Left cardiac atrium (tissue), 4 donors: ENCODE measurements at regions of chr11 and their contacts with region 1.

Region 1: DNA sequence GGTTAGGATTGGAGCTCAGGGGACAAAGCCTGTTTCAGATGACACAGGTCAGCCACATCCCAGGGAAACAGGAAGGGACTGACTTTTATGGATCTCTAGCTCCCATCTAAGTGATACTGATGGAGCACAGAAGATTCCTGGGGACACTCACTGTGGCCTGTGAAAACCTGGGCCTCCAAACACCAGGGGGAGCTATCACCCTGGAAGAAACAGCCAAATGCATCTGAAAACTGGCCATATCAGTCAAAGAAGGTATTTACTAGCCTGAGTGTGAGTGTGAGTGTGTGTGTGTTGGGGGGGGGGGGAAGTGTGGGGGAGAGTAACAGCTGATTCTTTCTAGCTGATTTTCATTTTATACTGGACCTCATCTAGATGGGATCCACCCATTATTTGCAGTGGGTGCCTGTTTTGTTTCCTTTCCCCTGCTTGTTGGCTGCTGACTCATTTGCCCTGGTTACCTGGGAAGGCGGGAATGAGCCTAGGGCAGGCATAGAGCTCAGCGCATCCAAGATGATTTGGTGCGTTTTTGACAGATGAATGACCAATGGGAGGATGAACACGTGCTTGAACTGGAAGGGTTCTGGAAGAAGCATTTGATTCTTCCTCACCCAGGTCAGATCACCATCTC is 284.0 kb downstream of the KIRREL3 start:
- DNase-seq: peak; percentile 41
- ATAC-seq: peak; percentile 33 to 53

Region 2: GRCh38 chr11:126800009-126800408 is 83.4 kb after region 1 on chr11:
- intact Hi-C with region 1: no loop called
- DNase-seq: no peak
- ATAC-seq: no peak

Region 3: DNA sequence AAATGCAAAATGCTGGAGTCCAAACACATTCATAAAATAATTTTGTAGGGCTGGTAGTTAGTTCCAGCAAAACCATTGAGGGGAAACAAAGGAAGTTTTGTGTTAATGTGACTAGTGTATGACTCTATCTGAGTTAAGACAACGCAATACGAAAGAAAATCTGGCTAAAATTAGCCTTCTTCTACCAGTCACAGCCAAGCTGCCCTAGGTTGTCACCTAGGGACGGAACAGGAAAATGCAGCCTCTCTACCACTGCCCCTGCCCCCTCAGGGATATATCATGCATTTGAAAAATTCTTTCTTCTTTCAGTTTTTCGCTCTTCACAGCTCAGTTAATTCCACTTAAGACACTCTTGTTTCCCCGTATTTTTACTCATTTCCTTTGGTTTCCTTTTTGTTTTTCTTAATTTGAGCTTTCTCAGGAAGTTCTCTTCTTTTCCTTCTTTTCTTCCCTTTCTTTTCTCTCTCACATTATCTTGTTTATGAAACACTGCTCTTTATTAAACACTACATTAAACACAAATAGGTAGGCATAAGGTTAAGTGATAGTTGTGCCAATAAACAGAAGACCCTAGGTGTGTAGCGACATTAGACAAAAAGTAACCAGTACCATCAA is 253.4 kb after region 1 on chr11:
- intact Hi-C with region 1: loop called in 1 of 2 experiments (anchors 5 kb)
- DNase-seq: no peak
- ATAC-seq: peak; percentile 70 to 74

Region 4: DNA sequence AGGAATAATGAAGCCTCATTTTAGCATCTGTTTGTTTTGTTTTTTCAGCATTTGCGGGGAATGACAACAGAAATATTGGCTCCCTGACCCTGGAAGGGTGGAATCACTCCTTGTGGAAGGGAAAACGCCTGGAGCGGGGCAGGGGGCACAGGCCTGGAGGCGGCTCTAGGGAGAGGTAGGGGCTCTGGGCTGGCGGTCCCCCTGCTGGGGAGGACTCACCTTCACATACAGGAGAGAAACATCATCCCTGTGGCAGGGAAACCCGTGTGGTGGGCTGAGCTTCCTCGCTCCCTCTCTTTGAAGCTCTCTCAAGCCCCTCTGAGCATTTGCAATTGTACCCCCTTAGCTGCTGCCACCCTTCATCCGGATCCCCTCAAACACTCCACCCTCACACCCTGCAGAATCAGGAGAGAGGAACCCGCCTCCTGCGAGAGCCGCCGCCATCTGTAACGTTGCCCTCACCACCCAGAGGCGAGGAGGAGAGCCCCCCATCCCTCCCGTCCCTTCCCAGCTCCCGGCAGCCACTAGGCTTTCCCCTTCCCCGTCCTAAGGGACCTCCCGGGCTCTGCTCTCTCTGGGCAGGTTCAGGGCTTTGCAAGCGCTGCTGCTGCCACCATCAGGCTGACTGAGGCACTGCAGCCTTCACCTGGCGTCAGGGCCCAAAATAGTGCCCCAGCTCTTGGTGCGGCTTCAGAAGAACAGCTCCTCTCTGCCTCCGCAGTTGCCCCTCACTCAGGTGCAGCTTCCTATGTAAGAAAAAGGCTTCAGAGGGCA is 273.6 kb after region 1 on chr11:
- intact Hi-C with region 1: loop called (anchors 2 to 5 kb)
- DNase-seq: peak; percentile 76
- ATAC-seq: peak; percentile 72 to 89

Region 5: GRCh38 chr11:127345819-127346459 is 629.4 kb after region 1 on chr11:
- intact Hi-C with region 1: loop called (anchors 5 to 10 kb)
- DNase-seq: peak; percentile 43
- ATAC-seq: no peak